Activated naive CD8-positive, alpha-beta T cell treated with anti-CD3 and anti-CD28 coated beads, Interleukin-2, amount 10 ng/mL, durations not matched to agents 7 days and 5 days (primary cell): ENCODE measurements at regions of chr3 and their contacts with region 1.

Region 1: GRCh38 chr3:170869645-170870593 is at the start of gene RPL22L1:
- DNase-seq: peak; percentile 89
- ATAC-seq: peak; percentile 94
- H3K4me3 Mint-ChIP-seq: peak within 1 kb of the TSS; percentile 94
- H3K27ac Mint-ChIP-seq: peak within 1 kb of the TSS; percentile 98
- H3K4me1 Mint-ChIP-seq: peaks cover 14% of the 10 kb centered on the region
- H3K27me3 Mint-ChIP-seq: peaks cover 2% of the 10 kb centered on the region
- total RNA-seq, gene RPL22L1: 50.6 to 54.5 TPM

Region 2: GRCh38 chr3:170908235-170909116 is 38.6 kb after region 1 on chr3 and contains the start of gene EIF5A2:
- POLR2A ChIA-PET with region 1: interaction called, 26 read pairs
- DNase-seq: peak; percentile 91
- ATAC-seq: peak; percentile 94
- H3K4me3 Mint-ChIP-seq: peak within 1 kb of the TSS; percentile 97
- H3K27ac Mint-ChIP-seq: peak within 1 kb of the TSS; percentile 94
- H3K4me1 Mint-ChIP-seq: peaks cover 19% of the 10 kb centered on the region
- H3K27me3 Mint-ChIP-seq: peaks cover 11% of the 10 kb centered on the region
- total RNA-seq, gene EIF5A2: 11.4 to 11.5 TPM